ENCODE measurements at regions of chr6 and their contacts with region 1.

Region 1: DNA sequence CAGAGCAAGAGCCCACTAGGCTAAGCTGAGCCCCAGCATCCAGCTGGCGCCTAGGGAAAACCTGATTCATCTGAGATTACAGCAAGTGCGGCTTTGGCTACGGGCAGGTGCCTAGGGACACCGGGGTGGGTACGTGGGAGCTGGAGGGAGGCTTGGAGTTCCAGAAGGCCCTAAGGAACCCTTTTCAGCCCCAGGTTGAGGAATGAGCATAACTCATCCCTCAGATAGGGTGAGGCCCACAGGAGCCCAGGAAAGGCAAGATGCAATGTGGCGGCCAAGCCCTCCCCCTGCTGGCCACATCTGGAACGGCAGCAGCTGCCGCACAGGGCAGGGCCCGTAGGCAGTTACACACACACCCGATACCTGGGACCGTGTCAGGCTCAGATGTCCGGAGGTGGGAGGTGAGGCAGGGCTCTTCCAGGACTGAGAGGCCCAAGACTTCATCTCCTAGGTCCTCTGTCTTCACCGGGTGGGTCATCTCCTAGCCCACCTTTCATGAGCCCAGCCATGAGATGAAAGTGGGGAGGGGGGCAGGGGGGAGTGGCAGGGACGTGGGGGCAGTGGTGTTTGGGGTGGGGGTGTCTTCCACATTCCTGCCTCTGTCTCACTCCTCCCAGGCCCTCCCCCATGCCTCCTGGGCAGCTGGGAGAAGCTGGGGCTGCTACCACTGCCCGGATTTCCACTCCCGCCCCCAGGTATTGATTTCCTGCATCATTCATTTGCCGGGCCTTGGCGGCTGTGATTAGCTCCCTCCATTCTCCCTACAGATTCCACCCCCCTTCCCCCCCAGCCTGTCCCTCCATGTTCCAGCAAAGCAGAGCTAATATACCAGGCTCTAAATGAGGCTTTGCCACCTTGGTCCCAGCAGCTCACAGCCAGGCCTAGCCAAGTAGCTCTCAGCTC is 5.5 kb downstream of the MDGA1 start:
- DNase-seq: peak; percentile 85
- CTCF ChIP-seq: peak; percentile 100

Region 2: GRCh38 chr6:37324131-37325033 is 367.8 kb before region 1 on chr6:
- CTCF ChIA-PET with region 1: interaction called, 43 read pairs
- POLR2A ChIA-PET with region 1: no interaction called
- DNase-seq: no peak
- CTCF ChIP-seq: no peak

Region 3: DNA sequence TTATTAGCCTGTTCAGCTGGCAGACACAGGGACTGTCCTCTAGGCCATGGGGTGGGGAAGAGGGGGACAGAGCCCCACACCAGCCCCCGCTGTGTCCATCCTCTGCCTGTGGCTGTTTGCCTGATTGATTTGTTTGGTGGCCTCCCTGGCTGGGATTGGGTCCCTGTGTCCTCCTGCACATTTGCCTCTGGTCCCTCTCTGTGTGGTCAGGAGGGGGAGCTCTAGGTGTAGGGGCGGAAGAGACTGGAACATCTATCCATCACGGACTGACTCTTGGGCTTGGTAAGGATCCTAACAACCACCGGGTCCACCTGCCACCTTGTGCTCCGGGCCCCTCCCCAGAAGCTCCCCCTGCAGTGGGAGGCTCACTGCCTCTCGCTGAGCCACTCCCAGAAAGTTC is 154.0 kb before region 1 on chr6:
- CTCF ChIA-PET with region 1: interaction called, 29 read pairs
- POLR2A ChIA-PET with region 1: no interaction called
- DNase-seq: peak; percentile 69
- CTCF ChIP-seq: peak; percentile 77

Region 4: GRCh38 chr6:37653933-37654565 is 38.1 kb before region 1 on chr6:
- CTCF ChIA-PET with region 1: interaction called, 13 read pairs
- POLR2A ChIA-PET with region 1: no interaction called
- DNase-seq: peak; percentile 72
- CTCF ChIP-seq: peak; percentile 47

Region 5: DNA sequence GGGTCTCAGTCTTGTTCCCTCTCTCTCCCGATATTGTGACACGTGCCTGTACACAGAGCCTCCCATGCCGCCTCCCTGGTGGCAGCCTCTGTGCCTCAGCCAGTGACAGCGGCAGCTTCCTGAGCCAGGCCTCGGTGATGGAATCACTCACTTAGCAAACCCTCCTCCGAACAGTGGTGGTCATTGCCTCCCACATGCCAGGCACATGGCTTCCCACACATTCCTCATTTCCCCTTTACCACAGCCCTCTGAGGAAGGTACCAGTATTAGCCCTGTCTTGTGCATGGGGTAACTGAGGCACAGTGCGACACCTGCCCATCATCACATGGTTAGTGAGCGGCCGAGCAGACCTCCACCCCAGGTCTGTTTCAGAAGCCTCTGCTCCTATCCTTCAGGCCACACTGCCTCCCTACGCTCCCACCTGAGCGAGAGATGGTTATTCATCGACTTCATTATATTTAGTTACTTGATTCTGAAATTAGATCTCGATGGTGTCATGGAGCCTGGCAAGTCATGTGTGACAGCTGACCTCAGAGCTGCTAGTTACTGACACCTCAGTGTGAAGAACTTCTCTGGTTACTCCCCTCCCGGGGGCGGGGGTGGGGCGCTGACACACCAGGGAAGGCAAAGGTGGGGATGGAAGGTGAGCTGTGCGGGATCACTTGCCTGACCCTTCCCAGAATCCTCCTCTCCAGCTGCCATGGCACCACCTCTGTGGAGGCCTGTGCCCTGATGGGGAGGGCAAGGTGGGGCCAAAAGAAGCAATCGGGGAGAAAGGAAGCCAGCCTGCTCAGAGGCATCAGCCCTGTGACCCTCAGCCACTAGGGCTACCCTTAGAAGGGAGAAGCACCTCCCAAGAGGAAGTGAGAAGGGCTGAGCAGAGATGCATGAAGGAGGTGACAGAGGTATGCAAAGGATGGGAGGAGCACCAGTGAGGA is 12.3 kb before region 1 on chr6:
- CTCF ChIA-PET with region 1: interaction called, 18 read pairs
- POLR2A ChIA-PET with region 1: no interaction called
- DNase-seq: peak; percentile 90
- CTCF ChIP-seq: no peak